Naive thymus-derived CD4-positive, alpha-beta T cell (primary cell): ENCODE measurements at regions of chr5 and their contacts with region 1.

Region 1: GRCh38 chr5:168219515-168220410 is 71.7 kb upstream of the WWC1 start:
- DNase-seq: peak in 5 of 9 donors; percentile 13 to 48 (median 21)
- ATAC-seq: peak; percentile 78
- H3K4me3 ChIP-seq: no peak overlapping the region
- H3K4me3 Mint-ChIP-seq: peak overlapping the region in 2 of 10 donors; percentile 25 to 42
- H3K27ac ChIP-seq: no peak overlapping the region
- H3K27ac Mint-ChIP-seq: no peak overlapping the region
- H3K4me1 ChIP-seq: no peaks in the 10 kb centered on the region
- H3K4me1 Mint-ChIP-seq: peaks cover 0 to 16% (median 5%) of the 10 kb centered on the region in 7 donors
- H3K27me3 ChIP-seq: no peaks in the 10 kb centered on the region
- H3K27me3 Mint-ChIP-seq: peaks cover 0 to 12% (median 0%) of the 10 kb centered on the region in 5 donors

Region 2: GRCh38 chr5:168114444-168115017 is 105.2 kb before region 1 on chr5:
- CTCF ChIA-PET with region 1: interaction called, 5 read pairs
- POLR2A ChIA-PET with region 1: no interaction called
- intact Hi-C with region 1: loop called (anchors 1 kb)
- DNase-seq: peak in 5 of 9 donors; percentile 5 to 46 (median 17)
- ATAC-seq: peak; percentile 80
- H3K4me3 ChIP-seq: no peak overlapping the region
- H3K4me3 Mint-ChIP-seq: no peak overlapping the region
- H3K27ac ChIP-seq: no peak overlapping the region
- H3K27ac Mint-ChIP-seq: no peak overlapping the region
- H3K4me1 ChIP-seq: no peaks in the 10 kb centered on the region
- H3K4me1 Mint-ChIP-seq: peaks cover 0 to 2% (median 0%) of the 10 kb centered on the region in 7 donors
- H3K27me3 ChIP-seq: no peaks in the 10 kb centered on the region
- H3K27me3 Mint-ChIP-seq: peaks cover 2 to 20% (median 16%) of the 10 kb centered on the region in 5 donors